Heart right ventricle (tissue), 16 donors: ENCODE measurements at regions of chr12 and their contacts with region 1.

Region 1: GRCh38 chr12:25958428-25959070 is at the start of gene RASSF8:
- DNase-seq: peak; percentile 79 to 83
- ATAC-seq: peak; percentile 82 to 94 (median 92)
- H3K4me3 ChIP-seq: peak within 1 kb of the TSS; percentile 68 to 94 (median 81)
- H3K27ac ChIP-seq: peak within 1 kb of the TSS; percentile 88 to 99 (median 93)
- H3K4me1 ChIP-seq: peaks cover 0 to 44% (median 17%) of the 10 kb centered on the region in 9 donors
- H3K27me3 ChIP-seq: peaks cover 0 to 36% (median 0%) of the 10 kb centered on the region in 7 donors
- CTCF ChIP-seq: no peak
- total RNA-seq, gene RASSF8: 18.8 to 43.9 (median 29.3) TPM

Region 2: DNA sequence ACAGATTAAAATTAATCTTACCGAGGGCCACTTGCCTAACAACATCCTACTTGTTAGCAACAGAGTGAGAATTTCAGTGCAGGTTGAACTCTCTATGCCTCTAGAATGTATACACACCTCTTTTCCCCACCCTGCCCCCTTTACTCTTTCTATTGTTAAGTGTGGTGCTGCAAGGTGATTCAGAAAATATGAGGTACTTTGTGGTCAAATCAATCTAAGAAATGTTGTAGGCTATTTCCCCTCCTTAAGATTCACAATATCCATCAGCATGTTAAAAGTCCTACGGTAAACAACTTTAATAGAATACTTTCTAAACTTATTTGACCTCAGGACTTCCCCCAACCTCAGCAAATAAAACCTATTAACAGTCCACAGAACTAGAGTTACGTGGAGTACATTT is 511.5 kb before region 1 on chr12:
- intact Hi-C with region 1: loop called in 1 of 10 experiments (anchors 10 kb)
- DNase-seq: no peak
- ATAC-seq: no peak
- H3K4me3 ChIP-seq: no peak overlapping the region
- H3K27ac ChIP-seq: no peak overlapping the region
- H3K4me1 ChIP-seq: no peaks in the 10 kb centered on the region
- H3K27me3 ChIP-seq: peaks cover 0 to 9% (median 0%) of the 10 kb centered on the region in 7 donors
- CTCF ChIP-seq: no peak

Region 3: GRCh38 chr12:26011099-26011498 is 52.5 kb after region 1 on chr12:
- intact Hi-C with region 1: loop called in 7 of 10 experiments (anchors 2 to 10 kb)
- DNase-seq: no peak
- ATAC-seq: peak; percentile 79 to 95 (median 91)
- H3K4me3 ChIP-seq: no peak overlapping the region
- H3K27ac ChIP-seq: peak overlapping the region; percentile 5 to 77 (median 57)
- H3K4me1 ChIP-seq: peaks cover 13 to 60% (median 43%) of the 10 kb centered on the region in 9 donors
- H3K27me3 ChIP-seq: no peaks in the 10 kb centered on the region
- CTCF ChIP-seq: no peak

Region 4: GRCh38 chr12:26028953-26029735 is 70.6 kb after region 1 on chr12:
- intact Hi-C with region 1: loop called in 6 of 10 experiments (anchors 5 kb)
- DNase-seq: peak in 1 of 2 donors; percentile 32
- ATAC-seq: peak in 7 of 8 donors; percentile 56 to 76 (median 68)
- H3K4me3 ChIP-seq: no peak overlapping the region
- H3K27ac ChIP-seq: peak overlapping the region in 2 of 10 donors; percentile 9 to 10
- H3K4me1 ChIP-seq: peaks cover 0 to 38% (median 14%) of the 10 kb centered on the region in 9 donors
- H3K27me3 ChIP-seq: no peaks in the 10 kb centered on the region
- CTCF ChIP-seq: peak; percentile 68 to 94 (median 85)